Naive thymus-derived CD4-positive, alpha-beta T cell (primary cell): ENCODE measurements at regions of chr10 and their contacts with region 1.

Region 1: DNA sequence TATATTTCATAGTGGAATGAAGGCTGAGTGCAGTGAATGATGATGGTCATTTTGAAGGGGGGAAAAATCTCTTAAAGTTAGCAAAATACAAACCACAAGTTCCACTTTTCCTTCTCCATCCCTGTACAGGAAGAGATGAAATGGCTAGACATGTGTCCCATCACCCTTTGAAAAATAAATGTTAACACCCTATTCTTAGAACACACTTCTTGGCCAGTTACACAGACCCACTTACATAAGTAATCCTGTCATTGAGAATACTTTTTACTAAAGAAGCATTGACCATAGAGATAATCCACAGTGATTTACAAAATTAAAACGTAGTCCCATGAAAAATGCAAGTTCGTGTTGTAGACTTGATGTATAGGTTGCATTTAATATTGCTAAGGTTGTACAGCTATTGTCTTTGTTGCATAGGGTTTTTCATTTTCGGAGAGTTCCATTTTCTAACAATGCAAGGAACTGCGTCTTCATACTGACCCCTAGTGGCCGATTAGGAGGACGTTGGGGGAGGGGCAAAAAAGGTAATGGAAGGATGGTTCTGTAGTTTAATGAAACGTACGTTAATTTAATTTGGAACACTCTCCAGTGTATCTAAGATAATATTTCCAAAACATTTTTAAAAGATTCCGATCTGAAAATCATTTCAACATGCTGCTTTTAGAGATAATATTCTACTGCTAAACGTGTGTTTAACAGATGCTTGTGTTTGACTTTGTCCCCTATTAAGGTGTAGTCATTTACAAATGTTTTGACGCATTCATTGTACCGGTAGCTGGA is 60.9 kb downstream of the ARMC3 start:
- DNase-seq: peak; percentile 14 to 83 (median 77)
- ATAC-seq: peak; percentile 94
- H3K4me3 ChIP-seq: no peak overlapping the region
- H3K4me3 Mint-ChIP-seq: peak overlapping the region in 4 of 10 donors; percentile 28 to 35 (median 30)
- H3K27ac ChIP-seq: no peak overlapping the region
- H3K27ac Mint-ChIP-seq: peak overlapping the region in 4 of 9 donors; percentile 17 to 65 (median 54)
- H3K4me1 ChIP-seq: peaks cover 0 to 4% of the 10 kb centered on the region in 2 donors
- H3K4me1 Mint-ChIP-seq: peaks cover 0 to 25% (median 18%) of the 10 kb centered on the region in 7 donors
- H3K27me3 ChIP-seq: no peaks in the 10 kb centered on the region
- H3K27me3 Mint-ChIP-seq: peaks cover 0 to 22% (median under 1%) of the 10 kb centered on the region in 5 donors

Region 2: GRCh38 chr10:22003079-22003913 is 985.5 kb before region 1 on chr10 and contains the start of gene DNAJC1:
- CTCF ChIA-PET with region 1: interaction called, 8 read pairs
- POLR2A ChIA-PET with region 1: interaction called, 7 read pairs
- intact Hi-C with region 1: loop called in 1 of 2 experiments (anchors 2 kb)
- DNase-seq: peak; percentile 94 to 99 (median 97)
- ATAC-seq: peak; percentile 97
- H3K4me3 ChIP-seq: peak within 1 kb of the TSS; percentile 87
- H3K4me3 Mint-ChIP-seq: peak within 1 kb of the TSS; percentile 81 to 99 (median 94)
- H3K27ac ChIP-seq: peak within 1 kb of the TSS; percentile 82
- H3K27ac Mint-ChIP-seq: peak within 1 kb of the TSS; percentile 78 to 94 (median 92)
- H3K4me1 ChIP-seq: peaks cover 18 to 19% of the 10 kb centered on the region in 2 donors
- H3K4me1 Mint-ChIP-seq: peaks cover 7 to 42% (median 29%) of the 10 kb centered on the region in 7 donors
- H3K27me3 ChIP-seq: no peaks in the 10 kb centered on the region
- H3K27me3 Mint-ChIP-seq: peaks cover 0 to 15% (median 4%) of the 10 kb centered on the region in 5 donors
- total RNA-seq, gene DNAJC1: 11.0 to 23.9 (median 12.1) TPM

Region 3: DNA sequence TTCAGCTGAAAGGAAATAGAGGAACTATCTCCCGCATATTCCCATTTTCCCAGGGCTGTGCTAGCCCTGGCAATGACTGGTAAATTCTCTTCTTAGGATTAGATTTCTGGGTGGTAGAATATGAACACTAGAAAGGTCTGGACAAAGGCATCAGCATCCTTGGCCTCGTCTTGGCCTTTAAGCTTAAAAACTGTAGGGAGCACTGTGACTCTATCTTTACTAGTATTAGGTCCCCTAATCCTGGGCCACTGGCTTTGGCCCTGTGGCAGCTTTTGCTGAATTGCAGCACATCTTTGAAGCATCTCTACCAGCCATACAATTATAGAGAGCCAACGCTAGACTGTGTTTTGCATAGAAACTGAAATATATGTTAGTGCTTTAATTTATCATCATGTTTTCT is 729.5 kb before region 1 on chr10:
- CTCF ChIA-PET with region 1: interaction called, 11 read pairs
- POLR2A ChIA-PET with region 1: no interaction called
- intact Hi-C with region 1: loop called (anchors 1 to 5 kb)
- DNase-seq: peak in 2 of 9 donors; percentile 23 to 25
- ATAC-seq: peak; percentile 55
- H3K4me3 ChIP-seq: no peak overlapping the region
- H3K4me3 Mint-ChIP-seq: peak overlapping the region in 2 of 10 donors; percentile 0 to 29
- H3K27ac ChIP-seq: no peak overlapping the region
- H3K27ac Mint-ChIP-seq: peak overlapping the region in 1 of 9 donors; percentile 37
- H3K4me1 ChIP-seq: peaks cover 0 to 14% of the 10 kb centered on the region in 2 donors
- H3K4me1 Mint-ChIP-seq: peaks cover 6 to 43% (median 18%) of the 10 kb centered on the region in 7 donors
- H3K27me3 ChIP-seq: no peaks in the 10 kb centered on the region
- H3K27me3 Mint-ChIP-seq: peaks cover 14 to 47% (median 25%) of the 10 kb centered on the region in 5 donors

Region 4: GRCh38 chr10:22420787-22421517 is 567.8 kb before region 1 on chr10:
- CTCF ChIA-PET with region 1: interaction called, 3 read pairs
- POLR2A ChIA-PET with region 1: no interaction called
- intact Hi-C with region 1: loop called in 1 of 2 experiments (anchors 1 kb)
- DNase-seq: peak in 4 of 9 donors; percentile 15 to 41 (median 40)
- ATAC-seq: peak; percentile 54
- H3K4me3 ChIP-seq: no peak overlapping the region
- H3K4me3 Mint-ChIP-seq: no peak overlapping the region
- H3K27ac ChIP-seq: no peak overlapping the region
- H3K27ac Mint-ChIP-seq: no peak overlapping the region
- H3K4me1 ChIP-seq: no peaks in the 10 kb centered on the region
- H3K4me1 Mint-ChIP-seq: peaks cover 0 to 3% (median 0%) of the 10 kb centered on the region in 7 donors
- H3K27me3 ChIP-seq: no peaks in the 10 kb centered on the region
- H3K27me3 Mint-ChIP-seq: peaks cover 0 to 4% (median 0%) of the 10 kb centered on the region in 5 donors

Region 5: DNA sequence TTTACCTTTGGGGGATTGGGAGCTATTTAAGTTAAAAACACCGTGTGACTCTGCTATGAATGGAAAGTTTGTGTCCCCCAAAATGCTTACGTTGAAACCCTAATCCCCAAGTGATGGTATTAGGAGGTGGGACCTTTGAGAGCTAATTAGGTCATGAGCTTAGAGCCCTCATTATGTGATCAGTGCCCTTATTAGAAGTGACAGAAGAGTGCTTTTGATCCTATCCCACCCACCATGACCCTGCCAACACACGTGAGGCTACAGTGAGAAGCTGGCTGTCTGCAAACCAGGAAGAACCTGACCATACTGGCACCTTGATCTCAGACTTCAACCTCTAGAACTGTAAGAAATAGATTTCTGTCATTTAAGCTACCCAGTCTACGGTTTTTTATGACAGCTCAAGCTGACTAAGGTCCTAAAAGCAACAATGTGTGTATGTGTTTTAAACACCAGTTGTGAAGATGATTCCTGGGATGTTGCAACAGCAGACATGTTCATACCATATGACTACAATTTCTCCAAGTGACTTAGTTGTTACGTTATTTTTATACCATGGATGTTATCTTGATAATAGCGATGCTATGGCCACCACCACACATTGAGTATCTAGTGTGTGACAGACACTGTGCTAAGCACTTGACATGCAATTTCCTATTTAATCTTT is 398.8 kb before region 1 on chr10:
- CTCF ChIA-PET with region 1: no interaction called
- POLR2A ChIA-PET with region 1: interaction called, 5 read pairs
- intact Hi-C with region 1: loop called (anchors 1 to 5 kb)
- DNase-seq: no peak
- ATAC-seq: no peak
- H3K4me3 ChIP-seq: no peak overlapping the region
- H3K4me3 Mint-ChIP-seq: no peak overlapping the region
- H3K27ac ChIP-seq: no peak overlapping the region
- H3K27ac Mint-ChIP-seq: peak overlapping the region in 6 of 9 donors; percentile 18 to 59 (median 33)
- H3K4me1 ChIP-seq: peaks cover 0 to 13% of the 10 kb centered on the region in 2 donors
- H3K4me1 Mint-ChIP-seq: peaks cover 22 to 75% (median 67%) of the 10 kb centered on the region in 7 donors
- H3K27me3 ChIP-seq: no peaks in the 10 kb centered on the region
- H3K27me3 Mint-ChIP-seq: no peaks in the 10 kb centered on the region

Region 6: DNA sequence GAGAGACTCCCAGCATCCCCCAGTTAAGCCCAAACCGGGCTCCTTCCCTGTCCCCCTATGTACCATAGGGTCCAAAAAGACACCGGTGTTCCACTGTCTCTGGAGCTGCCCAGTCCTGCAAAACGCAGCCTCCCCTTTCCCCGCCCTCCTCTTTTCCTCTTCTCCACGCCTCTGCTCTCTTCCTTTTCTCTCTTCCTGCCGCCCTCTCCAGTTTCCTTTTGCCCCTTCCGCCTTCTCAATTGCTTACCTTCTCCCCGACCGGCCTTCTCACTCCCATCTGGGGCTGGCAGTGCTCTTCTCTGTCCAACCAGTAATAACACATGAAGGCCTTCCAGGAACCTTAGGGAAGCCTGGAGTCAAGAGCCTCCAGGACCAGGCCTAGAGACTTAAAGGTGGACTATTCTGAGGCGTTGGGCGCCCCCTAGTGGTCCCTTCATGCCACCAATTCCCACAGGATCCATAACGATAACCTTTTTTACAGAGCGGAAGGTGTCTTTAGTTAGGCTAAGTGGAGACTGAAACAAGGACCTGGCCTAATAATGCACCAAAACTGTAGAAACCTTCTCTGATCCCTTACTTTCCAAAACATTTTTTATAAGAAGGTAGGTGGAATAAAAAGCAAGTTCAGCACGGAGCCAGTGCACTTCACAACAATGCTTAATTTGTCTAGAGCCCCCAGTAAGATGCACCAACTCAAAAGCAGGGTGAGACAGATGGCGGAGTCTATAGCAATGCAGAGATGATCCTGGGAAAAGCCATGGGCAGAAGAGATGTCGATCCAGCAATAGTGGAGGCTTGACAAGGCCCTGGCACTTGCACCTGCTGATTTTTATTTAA is 79.4 kb after region 1 on chr10:
- CTCF ChIA-PET with region 1: no interaction called
- POLR2A ChIA-PET with region 1: no interaction called
- intact Hi-C with region 1: loop called (anchors 1 to 2 kb)
- DNase-seq: peak; percentile 23 to 66 (median 48)
- ATAC-seq: peak; percentile 78
- H3K4me3 ChIP-seq: no peak overlapping the region
- H3K4me3 Mint-ChIP-seq: no peak overlapping the region
- H3K27ac ChIP-seq: no peak overlapping the region
- H3K27ac Mint-ChIP-seq: no peak overlapping the region
- H3K4me1 ChIP-seq: no peaks in the 10 kb centered on the region
- H3K4me1 Mint-ChIP-seq: peaks cover 0 to 2% (median 0%) of the 10 kb centered on the region in 7 donors
- H3K27me3 ChIP-seq: no peaks in the 10 kb centered on the region
- H3K27me3 Mint-ChIP-seq: peaks cover 0 to 6% (median 2%) of the 10 kb centered on the region in 5 donors